ENCODE measurements at regions of chr1 and their contacts with region 1.

Region 1: GRCh38 chr1:28505406-28506187 is at the start of gene RCC1:
- DNase-seq: peak; percentile 84 to 98 (median 95)
- ATAC-seq: peak; percentile 91 to 94
- H3K4me3 Mint-ChIP-seq: peak within 1 kb of the TSS; percentile 94 to 99 (median 98)
- H3K27ac Mint-ChIP-seq: peak within 1 kb of the TSS; percentile 97 to 100 (median 98)
- H3K4me1 Mint-ChIP-seq: peaks cover 15 to 52% (median 38%) of the 10 kb centered on the region in 4 donors
- H3K27me3 Mint-ChIP-seq: no peaks in the 10 kb centered on the region
- polyA plus RNA-seq, gene RCC1: 11.7 to 16.1 (median 12.2) TPM

Region 2: DNA sequence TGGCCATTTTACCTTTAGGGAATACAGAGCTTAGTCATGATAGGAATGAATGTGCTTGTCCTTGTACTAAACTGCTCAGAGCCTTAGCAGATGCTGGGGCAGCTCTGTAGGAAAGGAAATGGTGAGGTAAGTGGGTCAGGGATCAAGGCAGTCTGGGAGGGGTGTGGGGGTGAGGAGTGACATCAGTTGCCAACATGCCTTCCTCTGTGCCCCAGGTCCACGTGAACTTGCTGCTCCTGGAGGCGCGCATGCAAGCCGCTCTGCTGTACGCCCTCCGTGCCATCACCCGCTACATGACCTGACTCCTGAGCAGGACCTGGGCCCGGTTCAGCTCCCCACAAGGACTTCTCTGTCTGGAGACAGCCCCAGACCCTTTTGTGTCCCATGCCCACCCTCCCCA is 225.1 kb before region 1 on chr1:
- POLR2A ChIA-PET with region 1: no interaction called
- DNase-seq: no peak
- ATAC-seq: no peak
- H3K4me3 Mint-ChIP-seq: no peak overlapping the region
- H3K27ac Mint-ChIP-seq: no peak overlapping the region
- H3K4me1 Mint-ChIP-seq: peaks cover 0 to 6% (median 4%) of the 10 kb centered on the region in 4 donors
- H3K27me3 Mint-ChIP-seq: no peaks in the 10 kb centered on the region

Region 3: DNA sequence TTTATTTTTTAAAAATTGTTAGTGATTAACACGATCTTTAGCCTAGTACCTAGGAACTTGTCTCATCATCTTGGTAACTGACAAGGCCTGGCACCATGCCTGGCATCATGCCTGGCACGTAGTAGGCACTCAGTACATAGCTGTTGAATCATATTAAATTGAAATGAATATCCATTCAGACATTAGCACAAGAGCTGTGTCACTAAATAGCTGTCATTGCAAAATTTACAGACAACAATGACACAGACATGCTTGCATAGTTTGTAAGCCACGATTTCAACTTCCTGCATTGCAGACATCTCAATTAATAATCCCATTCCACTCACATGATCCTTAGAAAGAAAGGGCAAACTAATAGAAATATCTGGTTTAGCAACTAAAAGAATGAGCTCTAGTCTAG is 151.5 kb before region 1 on chr1:
- POLR2A ChIA-PET with region 1: no interaction called
- DNase-seq: no peak
- ATAC-seq: no peak
- H3K4me3 Mint-ChIP-seq: no peak overlapping the region
- H3K27ac Mint-ChIP-seq: no peak overlapping the region
- H3K4me1 Mint-ChIP-seq: no peaks in the 10 kb centered on the region
- H3K27me3 Mint-ChIP-seq: no peaks in the 10 kb centered on the region

Region 4: DNA sequence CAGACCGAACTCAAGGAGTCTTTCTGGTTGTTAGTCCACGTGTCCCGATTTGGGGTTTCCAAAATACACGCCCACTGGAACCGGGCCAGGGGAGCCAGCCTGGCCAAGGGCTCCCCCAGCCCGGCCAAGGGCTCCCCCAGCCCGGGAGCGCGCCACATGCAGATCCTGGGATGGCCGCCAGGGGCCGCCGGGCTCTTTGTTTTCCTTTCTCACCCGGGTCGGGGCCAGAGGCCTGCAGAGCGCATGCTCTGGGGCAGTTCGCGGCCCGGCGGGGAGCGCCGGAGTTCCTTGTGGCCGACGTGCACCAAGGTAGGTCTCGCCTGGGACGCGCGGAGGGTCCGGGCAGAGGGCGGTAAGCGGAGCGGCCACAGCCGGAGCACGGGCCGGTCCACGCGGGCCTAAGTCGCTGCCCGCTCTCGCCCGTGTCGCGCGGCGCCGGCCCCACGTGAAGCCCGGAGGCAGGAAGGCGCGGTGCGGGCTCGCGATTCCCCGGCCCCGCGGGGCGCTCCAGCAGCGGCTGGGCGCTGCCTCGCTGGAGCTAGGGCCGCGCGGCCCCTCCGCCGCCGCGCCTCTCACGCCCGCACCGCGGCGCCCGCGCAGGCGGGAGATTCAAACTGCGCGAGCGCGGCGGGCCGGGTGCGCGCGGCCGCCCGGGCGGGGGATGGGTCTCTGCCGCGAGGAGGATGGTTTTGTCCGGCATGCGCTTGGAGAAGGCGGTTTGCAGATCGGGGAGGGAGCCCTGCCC is 12.6 kb after region 1 on chr1:
- POLR2A ChIA-PET with region 1: interaction called, 42 read pairs
- DNase-seq: peak; percentile 77 to 92 (median 86)
- ATAC-seq: peak; percentile 87
- H3K4me3 Mint-ChIP-seq: peak overlapping the region; percentile 81 to 92 (median 88)
- H3K27ac Mint-ChIP-seq: peak overlapping the region in 9 of 10 donors; percentile 66 to 94 (median 84)
- H3K4me1 Mint-ChIP-seq: peaks cover 14 to 41% (median 32%) of the 10 kb centered on the region in 4 donors
- H3K27me3 Mint-ChIP-seq: no peaks in the 10 kb centered on the region

Region 5: DNA sequence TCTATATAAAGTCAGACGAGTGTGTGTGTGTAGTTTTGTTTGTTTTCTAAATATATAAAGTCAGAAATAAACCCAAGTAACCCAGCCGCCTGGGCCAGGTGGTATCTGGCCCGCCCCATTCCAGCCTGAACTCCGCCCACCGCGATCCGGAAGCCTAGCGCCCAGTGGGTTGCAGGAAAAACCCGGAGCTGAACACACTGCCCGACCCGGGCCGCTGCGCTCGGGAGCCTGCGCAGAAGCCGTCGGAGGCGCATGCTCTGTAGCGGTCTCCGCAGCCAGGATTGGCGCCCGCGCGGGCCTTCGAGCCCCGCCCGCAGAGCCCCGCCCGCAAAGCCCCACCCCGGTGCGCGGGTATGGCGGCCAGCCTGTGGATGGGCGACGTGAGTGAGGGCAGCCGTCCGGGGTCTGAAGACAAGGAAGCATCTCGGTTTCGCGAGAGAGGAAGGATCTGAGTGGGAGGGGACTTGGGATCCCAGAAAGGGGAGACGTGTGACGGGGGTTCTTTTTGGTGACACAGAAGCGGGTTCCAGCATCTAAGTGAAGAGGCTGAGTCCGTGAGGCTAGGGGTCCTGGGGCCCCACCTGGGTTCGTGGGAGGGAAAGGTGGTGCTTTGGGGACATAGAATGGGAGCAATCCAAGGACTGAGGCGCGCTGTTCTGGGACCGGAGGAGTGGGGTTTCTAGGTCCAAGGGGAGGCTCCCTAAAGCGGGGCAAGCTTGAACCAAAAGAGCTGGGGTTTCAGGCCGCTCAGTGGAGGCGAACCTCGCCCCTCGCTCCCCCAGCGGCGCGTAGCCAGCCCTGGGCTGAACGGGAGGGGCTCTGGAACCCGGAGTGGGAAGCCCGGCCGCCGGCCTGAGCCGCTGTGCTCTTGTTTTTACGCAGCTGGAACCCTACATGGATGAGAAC is 47.4 kb after region 1 on chr1 and contains the start of gene TRNAU1AP:
- POLR2A ChIA-PET with region 1: interaction called, 12 read pairs
- DNase-seq: peak; percentile 94 to 98 (median 96)
- ATAC-seq: peak; percentile 89 to 91
- H3K4me3 Mint-ChIP-seq: peak within 1 kb of the TSS; percentile 96 to 100 (median 98)
- H3K27ac Mint-ChIP-seq: peak within 1 kb of the TSS; percentile 94 to 99 (median 98)
- H3K4me1 Mint-ChIP-seq: peaks cover 9 to 30% (median 21%) of the 10 kb centered on the region in 4 donors
- H3K27me3 Mint-ChIP-seq: no peaks in the 10 kb centered on the region
- polyA plus RNA-seq, gene TRNAU1AP: 21.5 to 25.3 (median 22.6) TPM

Region 6: GRCh38 chr1:28642847-28643635 is 137.4 kb after region 1 on chr1 and contains the start of gene TAF12:
- POLR2A ChIA-PET with region 1: interaction called, 21 read pairs
- DNase-seq: peak; percentile 78 to 95 (median 90)
- ATAC-seq: peak; percentile 85 to 86
- H3K4me3 Mint-ChIP-seq: peak within 1 kb of the TSS; percentile 96 to 100 (median 99)
- H3K27ac Mint-ChIP-seq: peak within 1 kb of the TSS; percentile 96 to 99 (median 98)
- H3K4me1 Mint-ChIP-seq: peaks cover 24 to 71% (median 57%) of the 10 kb centered on the region in 4 donors
- H3K27me3 Mint-ChIP-seq: no peaks in the 10 kb centered on the region
- polyA plus RNA-seq, gene TAF12: 42.4 to 50.1 (median 47.3) TPM

Region 7: DNA sequence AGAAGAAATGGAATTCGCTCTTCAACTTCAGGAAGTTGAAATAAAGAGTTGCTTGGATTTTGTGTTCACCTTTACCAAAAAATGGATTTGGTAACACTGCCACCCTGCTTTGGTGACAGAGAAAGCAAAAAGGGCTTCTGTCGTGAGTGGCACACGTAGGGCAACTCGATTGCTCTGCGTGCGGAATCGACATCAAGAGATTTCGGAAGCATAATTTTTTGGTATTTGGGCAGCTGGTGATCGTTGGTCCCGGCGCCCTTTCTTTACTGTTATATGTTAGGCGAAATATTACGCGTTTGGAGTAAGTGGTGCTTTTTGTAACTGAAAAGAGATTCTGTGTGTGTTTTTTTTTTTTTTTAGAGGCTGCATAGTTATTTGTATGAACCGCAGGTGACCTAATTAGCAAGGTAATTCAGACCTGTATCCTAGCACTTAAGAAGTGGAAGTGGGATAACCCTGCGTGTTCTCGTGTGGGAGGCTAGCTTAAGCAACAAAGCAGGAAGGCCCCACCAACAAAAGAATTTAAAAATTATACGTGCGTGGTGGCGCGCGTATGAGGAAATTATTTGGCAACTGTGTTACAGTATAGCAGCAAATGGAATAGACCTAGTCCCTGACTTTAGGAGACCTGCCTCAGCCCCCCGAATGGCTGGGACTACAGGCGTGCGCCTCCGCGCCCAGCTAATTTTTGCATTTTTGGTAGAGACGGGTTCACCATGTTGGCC is 143.0 kb after region 1 on chr1 and contains the start of gene RNU11:
- POLR2A ChIA-PET with region 1: interaction called, 21 read pairs
- DNase-seq: peak; percentile 57 to 99 (median 88)
- ATAC-seq: peak; percentile 78 to 80
- H3K4me3 Mint-ChIP-seq: peak within 1 kb of the TSS; percentile 78 to 97 (median 91)
- H3K27ac Mint-ChIP-seq: peak within 1 kb of the TSS; percentile 98 to 100 (median 99)
- H3K4me1 Mint-ChIP-seq: peaks cover 16 to 38% (median 32%) of the 10 kb centered on the region in 4 donors
- H3K27me3 Mint-ChIP-seq: no peaks in the 10 kb centered on the region
- polyA plus RNA-seq, gene RNU11: not detected

Measured in naive thymus-derived CD8-positive, alpha-beta T cell (primary cell).